ENCODE measurements at regions of chr10 and their contacts with region 1.

Region 1: DNA sequence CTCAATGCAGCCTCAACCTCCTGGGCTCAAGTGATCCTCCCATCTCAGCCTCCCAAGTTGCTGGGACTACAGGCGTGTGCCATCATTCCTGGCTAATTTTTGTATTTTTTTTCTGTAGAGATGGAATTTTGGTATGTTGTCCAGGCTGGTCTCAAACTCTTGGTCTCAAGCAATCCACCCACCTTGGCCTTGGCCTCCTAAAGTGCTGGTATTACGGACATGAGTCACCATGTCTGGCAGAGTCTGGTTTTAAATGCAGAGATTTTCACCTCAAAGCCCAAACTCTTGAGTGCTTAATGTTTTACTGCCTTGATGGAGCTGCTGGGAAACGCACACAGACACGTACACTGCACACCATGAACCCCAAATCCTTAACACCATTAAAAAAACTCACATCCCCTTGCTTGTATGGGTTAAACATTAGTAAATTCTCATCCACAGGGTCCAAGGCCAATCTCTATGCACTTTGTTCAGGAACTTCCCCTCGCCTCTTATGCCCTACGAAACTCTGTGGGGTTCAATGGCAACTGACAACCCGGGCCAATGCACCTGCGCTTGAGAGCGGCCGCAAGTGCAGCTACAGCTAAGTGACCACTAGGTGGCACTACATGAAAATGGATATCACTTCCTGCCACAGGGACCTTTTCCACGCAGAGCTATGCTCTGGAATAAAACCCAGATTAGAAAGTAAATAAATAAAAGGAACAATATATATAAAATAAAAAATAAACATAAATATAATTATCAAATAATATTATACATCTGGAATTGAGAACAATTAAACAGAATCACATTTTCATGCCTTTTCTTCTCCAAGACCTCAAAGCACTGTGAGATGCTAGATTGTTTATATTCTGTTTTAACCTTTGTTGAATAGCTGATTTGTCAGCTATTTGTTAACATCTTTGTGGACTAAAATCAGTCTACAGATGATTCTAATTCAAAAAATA is 66.9 kb upstream of the AFAP1L2 start:
- DNase-seq: peak; percentile 35 to 75 (median 64)
- ATAC-seq: peak; percentile 92
- H3K4me3 ChIP-seq: no peak overlapping the region
- H3K4me3 Mint-ChIP-seq: peak overlapping the region in 6 of 10 donors; percentile 23 to 64 (median 39)
- H3K27ac ChIP-seq: peak overlapping the region; percentile 47
- H3K27ac Mint-ChIP-seq: peak overlapping the region; percentile 11 to 96 (median 73)
- H3K4me1 ChIP-seq: peaks cover 0 to 10% of the 10 kb centered on the region in 2 donors
- H3K4me1 Mint-ChIP-seq: peaks cover 10 to 54% (median 43%) of the 10 kb centered on the region in 7 donors
- H3K27me3 ChIP-seq: no peaks in the 10 kb centered on the region
- H3K27me3 Mint-ChIP-seq: no peaks in the 10 kb centered on the region

Region 2: DNA sequence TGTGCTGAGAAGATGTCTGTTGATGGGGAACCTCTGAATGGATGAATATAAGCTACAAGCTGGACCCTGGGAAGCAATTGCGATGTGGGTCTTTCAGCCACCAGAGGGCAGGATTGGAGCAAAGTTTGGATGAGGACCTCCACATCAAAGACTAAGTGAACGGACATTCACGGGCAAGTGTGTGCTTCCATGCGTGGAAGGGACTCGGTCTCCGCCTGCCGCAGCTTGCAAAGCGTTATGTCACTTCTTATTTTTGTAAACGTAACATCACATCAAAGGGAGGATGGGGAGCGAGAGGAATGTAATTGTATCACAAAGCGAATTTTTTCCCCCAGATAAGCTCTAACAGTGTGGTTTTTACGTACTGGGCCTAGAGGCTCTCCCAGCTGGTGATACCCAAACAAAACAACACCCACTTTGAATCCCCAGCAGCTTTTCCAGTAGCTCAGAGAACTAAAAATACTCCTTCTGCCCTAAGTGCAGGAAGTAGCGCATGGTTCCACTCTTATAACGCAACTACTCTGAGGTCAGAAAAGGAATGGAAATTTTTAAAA is 167.1 kb before region 1 on chr10:
- CTCF ChIA-PET with region 1: interaction called, 12 read pairs
- POLR2A ChIA-PET with region 1: no interaction called
- intact Hi-C with region 1: loop called (anchors 1 kb)
- DNase-seq: peak; percentile 19 to 67 (median 52)
- ATAC-seq: peak; percentile 60
- H3K4me3 ChIP-seq: peak overlapping the region; percentile 68
- H3K4me3 Mint-ChIP-seq: peak overlapping the region; percentile 83 to 94 (median 92)
- H3K27ac ChIP-seq: peak overlapping the region; percentile 6
- H3K27ac Mint-ChIP-seq: peak overlapping the region in 8 of 9 donors; percentile 4 to 86 (median 68)
- H3K4me1 ChIP-seq: peaks cover 4 to 5% of the 10 kb centered on the region in 2 donors
- H3K4me1 Mint-ChIP-seq: peaks cover 9 to 13% (median 12%) of the 10 kb centered on the region in 7 donors
- H3K27me3 ChIP-seq: no peaks in the 10 kb centered on the region
- H3K27me3 Mint-ChIP-seq: no peaks in the 10 kb centered on the region

Region 3: DNA sequence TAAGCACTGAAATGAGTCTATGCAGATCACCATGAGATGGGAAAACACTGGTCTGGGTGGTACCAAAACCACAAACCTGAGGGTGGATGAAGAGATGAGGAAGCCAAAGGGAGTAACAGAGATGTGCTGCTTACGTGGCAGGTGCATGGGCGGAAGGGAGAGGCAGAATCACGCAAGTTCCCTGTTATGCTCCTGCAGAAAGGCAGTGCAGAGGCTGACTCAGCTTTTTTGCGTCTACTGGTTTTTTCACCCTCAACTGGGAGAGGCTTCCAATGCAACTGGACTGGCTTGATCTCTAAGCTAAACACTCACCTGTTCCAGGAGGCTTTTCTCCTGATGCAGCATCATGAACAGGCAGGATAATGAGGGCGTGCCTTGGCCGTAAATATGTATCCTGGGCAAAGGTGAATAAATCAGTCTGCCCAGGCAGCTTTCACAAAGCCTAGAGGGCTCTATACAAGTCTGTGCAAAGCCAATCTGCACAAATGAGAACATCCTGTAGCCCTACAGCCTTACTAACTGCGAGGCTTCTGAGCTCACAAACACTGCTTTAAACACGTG is 28.5 kb after region 1 on chr10:
- CTCF ChIA-PET with region 1: interaction called, 13 read pairs
- POLR2A ChIA-PET with region 1: no interaction called
- intact Hi-C with region 1: no loop called
- DNase-seq: peak in 8 of 9 donors; percentile 53 to 73 (median 67)
- ATAC-seq: peak; percentile 66
- H3K4me3 ChIP-seq: peak overlapping the region; percentile 2
- H3K4me3 Mint-ChIP-seq: peak overlapping the region; percentile 69 to 79 (median 74)
- H3K27ac ChIP-seq: peak overlapping the region; percentile 78
- H3K27ac Mint-ChIP-seq: peak overlapping the region; percentile 74 to 96 (median 93)
- H3K4me1 ChIP-seq: peaks cover 12 to 81% of the 10 kb centered on the region in 2 donors
- H3K4me1 Mint-ChIP-seq: peaks cover 57 to 100% (median 93%) of the 10 kb centered on the region in 7 donors
- H3K27me3 ChIP-seq: no peaks in the 10 kb centered on the region
- H3K27me3 Mint-ChIP-seq: no peaks in the 10 kb centered on the region

Region 4: DNA sequence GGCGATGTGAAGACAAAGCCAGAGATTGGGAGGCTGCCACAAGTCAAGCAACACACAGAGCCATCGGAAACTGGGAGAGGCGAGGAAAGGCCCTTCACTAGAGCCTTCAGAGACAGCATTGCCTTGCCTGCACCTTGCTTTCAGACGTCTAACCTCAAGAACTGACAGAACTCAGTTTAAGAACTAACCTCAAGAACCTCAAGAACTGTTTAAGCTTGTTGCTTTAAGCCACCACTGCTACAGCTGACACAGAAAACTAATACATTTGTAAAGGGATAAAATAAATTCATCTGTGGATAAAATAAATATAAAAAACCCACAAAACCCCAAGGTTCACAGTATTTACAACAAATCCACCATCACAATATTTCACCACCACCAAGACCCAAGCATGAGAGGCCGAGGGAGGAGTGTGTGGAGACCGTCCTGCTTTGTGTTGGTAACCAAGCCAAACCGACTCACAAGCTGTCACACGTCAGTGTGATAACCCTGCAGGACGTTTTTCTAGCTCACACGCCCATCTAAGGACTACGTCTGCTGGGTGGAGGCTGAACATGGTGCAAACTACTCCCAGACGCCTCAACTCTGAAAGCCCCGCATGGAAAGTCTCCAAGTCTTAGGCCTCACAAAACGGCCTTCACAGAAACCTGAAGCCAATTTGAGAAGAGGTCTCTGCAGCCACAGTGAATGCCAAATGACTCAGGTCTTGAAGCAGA is 70.0 kb after region 1 on chr10:
- CTCF ChIA-PET with region 1: interaction called, 108 read pairs
- POLR2A ChIA-PET with region 1: interaction called, 11 read pairs
- intact Hi-C with region 1: loop called (anchors 1 kb)
- DNase-seq: peak; percentile 38 to 92 (median 88)
- ATAC-seq: peak; percentile 88
- H3K4me3 ChIP-seq: peak overlapping the region; percentile 32
- H3K4me3 Mint-ChIP-seq: peak overlapping the region; percentile 74 to 86 (median 79)
- H3K27ac ChIP-seq: peak overlapping the region; percentile 94
- H3K27ac Mint-ChIP-seq: peak overlapping the region; percentile 94 to 99 (median 99)
- H3K4me1 ChIP-seq: peaks cover 85 to 97% of the 10 kb centered on the region in 2 donors
- H3K4me1 Mint-ChIP-seq: peaks cover 63 to 98% (median 94%) of the 10 kb centered on the region in 7 donors
- H3K27me3 ChIP-seq: no peaks in the 10 kb centered on the region
- H3K27me3 Mint-ChIP-seq: no peaks in the 10 kb centered on the region

Region 5: GRCh38 chr10:114694752-114695151 is 223.5 kb after region 1 on chr10:
- CTCF ChIA-PET with region 1: interaction called, 6 read pairs
- POLR2A ChIA-PET with region 1: no interaction called
- intact Hi-C with region 1: loop called in 1 of 2 experiments (anchors 2 kb)
- DNase-seq: peak in 3 of 9 donors; percentile 4 to 21 (median 13)
- ATAC-seq: no peak
- H3K4me3 ChIP-seq: no peak overlapping the region
- H3K4me3 Mint-ChIP-seq: no peak overlapping the region
- H3K27ac ChIP-seq: no peak overlapping the region
- H3K27ac Mint-ChIP-seq: no peak overlapping the region
- H3K4me1 ChIP-seq: peaks cover 0 to 9% of the 10 kb centered on the region in 2 donors
- H3K4me1 Mint-ChIP-seq: peaks cover 6 to 11% (median 9%) of the 10 kb centered on the region in 7 donors
- H3K27me3 ChIP-seq: no peaks in the 10 kb centered on the region
- H3K27me3 Mint-ChIP-seq: peaks cover 10 to 32% (median 19%) of the 10 kb centered on the region in 5 donors

Region 6: GRCh38 chr10:114821293-114821914 is 350.2 kb after region 1 on chr10 and contains the start of gene FHIP2A:
- CTCF ChIA-PET with region 1: interaction called, 5 read pairs
- POLR2A ChIA-PET with region 1: no interaction called
- intact Hi-C with region 1: loop called in 1 of 2 experiments (anchors 5 kb)
- DNase-seq: peak; percentile 69 to 96 (median 87)
- ATAC-seq: peak; percentile 98
- H3K4me3 ChIP-seq: peak within 1 kb of the TSS; percentile 83
- H3K4me3 Mint-ChIP-seq: peak within 1 kb of the TSS; percentile 79 to 96 (median 94)
- H3K27ac ChIP-seq: peak within 1 kb of the TSS; percentile 87
- H3K27ac Mint-ChIP-seq: peak within 1 kb of the TSS; percentile 86 to 95 (median 92)
- H3K4me1 ChIP-seq: peaks cover 6 to 22% of the 10 kb centered on the region in 2 donors
- H3K4me1 Mint-ChIP-seq: peaks cover 14 to 44% (median 33%) of the 10 kb centered on the region in 7 donors
- H3K27me3 ChIP-seq: no peaks in the 10 kb centered on the region
- H3K27me3 Mint-ChIP-seq: peaks cover 0 to 29% (median 0%) of the 10 kb centered on the region in 5 donors
- total RNA-seq, gene FHIP2A: 17.5 to 28.7 (median 19.6) TPM